ENCODE measurements at regions of chr3 and their contacts with region 1.

Region 1: DNA sequence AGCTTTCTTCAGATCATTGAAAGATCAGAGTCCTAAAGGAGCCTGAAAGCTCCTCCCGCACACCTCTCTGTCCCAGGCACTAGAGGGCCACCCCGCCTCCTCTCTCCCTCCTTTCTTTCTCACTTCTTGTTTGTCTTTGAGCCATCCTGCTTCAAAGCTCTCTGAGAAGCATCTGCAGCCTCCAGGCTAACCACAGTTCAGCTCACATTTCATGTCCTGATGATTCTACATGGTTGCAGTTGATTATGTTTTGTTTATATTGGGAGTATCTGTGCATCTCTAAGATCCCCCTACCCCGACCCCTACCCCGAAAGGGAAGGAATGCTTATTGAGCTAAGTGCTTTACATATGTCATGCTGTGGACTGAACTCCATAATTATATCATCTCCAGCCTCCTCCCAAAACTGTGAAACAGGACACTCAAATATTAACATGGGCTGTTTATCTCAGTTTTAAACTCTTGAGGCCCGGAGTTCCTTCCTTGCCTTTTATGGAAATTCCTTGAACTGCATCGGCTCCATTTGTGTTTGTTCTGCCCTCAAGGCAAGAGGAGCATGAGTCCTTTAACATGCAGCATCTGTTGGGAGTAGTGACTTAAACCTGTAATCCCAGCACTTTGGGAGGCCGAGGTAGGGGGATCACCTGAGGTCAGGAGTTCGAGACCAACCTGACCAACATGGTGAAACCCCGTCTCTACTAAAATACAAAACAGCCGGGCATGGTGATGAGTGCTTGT is 30.9 kb downstream of the MGLL start:
- DNase-seq: peak; percentile 69
- ATAC-seq: peak; percentile 89
- H3K4me3 ChIP-seq: no peak overlapping the region
- H3K27ac ChIP-seq: peak overlapping the region; percentile 41
- H3K4me1 ChIP-seq: peaks cover 28% of the 10 kb centered on the region
- H3K27me3 ChIP-seq: no peaks in the 10 kb centered on the region
- CTCF ChIP-seq: peak; percentile 54

Region 2: DNA sequence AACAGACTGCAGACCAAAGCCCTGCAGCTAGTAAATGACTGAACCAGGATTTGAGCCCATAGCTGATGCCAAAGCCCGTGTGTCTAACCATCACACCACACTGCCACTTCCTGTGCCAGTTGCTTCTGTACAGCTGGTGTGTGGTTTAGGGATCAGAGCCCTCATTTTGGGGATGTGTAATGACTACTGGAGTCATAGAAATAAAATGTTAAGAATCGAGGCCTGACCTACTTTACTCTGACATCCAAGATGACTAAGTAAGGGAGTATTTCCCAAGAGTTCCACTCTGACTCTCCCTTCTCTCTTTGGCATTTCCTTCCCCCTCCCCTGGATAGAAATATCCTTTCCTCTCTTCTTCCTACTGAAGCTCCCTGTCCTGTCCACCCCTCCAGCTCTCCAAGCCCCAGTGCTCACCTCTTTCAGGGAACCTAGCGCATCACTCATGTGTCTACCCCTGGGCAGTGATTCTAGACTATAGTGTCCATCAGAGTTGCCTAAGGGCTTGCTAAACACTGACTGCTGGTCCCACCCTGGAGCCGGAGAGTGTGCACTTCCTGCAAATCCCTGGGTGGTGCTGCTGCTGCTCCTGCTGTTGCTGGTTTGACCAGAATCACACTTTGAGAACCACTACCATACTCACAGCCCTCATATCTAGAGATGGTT is 22.9 kb before region 1 on chr3:
- CTCF ChIA-PET with region 1: interaction called, 4 read pairs
- POLR2A ChIA-PET with region 1: no interaction called
- intact Hi-C with region 1: loop called (anchors 1 kb)
- DNase-seq: peak; percentile 95
- ATAC-seq: peak; percentile 91
- H3K4me3 ChIP-seq: no peak overlapping the region
- H3K27ac ChIP-seq: peak overlapping the region; percentile 88
- H3K4me1 ChIP-seq: peaks cover 28% of the 10 kb centered on the region
- H3K27me3 ChIP-seq: no peaks in the 10 kb centered on the region
- CTCF ChIP-seq: no peak

Region 3: DNA sequence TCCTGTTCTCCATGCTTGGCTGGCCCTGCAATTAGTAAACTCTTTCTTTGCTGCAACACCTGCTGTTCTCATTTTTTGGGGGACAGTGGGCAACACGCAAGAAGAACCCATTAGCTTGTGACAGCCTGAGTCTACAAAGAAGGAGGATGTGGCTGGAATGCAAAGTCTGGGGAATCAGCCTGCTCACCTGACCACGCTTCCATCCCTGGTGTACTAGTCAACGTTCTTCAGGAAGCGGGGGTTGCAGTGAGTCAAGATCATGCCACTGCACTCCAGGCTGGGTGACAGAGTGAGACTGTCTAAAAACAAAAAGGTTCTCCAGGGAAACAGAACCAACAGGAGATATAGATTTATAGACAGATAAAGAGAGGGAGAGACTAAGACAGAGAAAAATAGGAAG is 95.9 kb after region 1 on chr3:
- CTCF ChIA-PET with region 1: no interaction called
- POLR2A ChIA-PET with region 1: no interaction called
- intact Hi-C with region 1: no loop called
- DNase-seq: peak; percentile 42
- ATAC-seq: peak; percentile 49; the same call in 1 of the 2 replicates
- H3K4me3 ChIP-seq: no peak overlapping the region
- H3K27ac ChIP-seq: no peak overlapping the region
- H3K4me1 ChIP-seq: no peaks in the 10 kb centered on the region
- H3K27me3 ChIP-seq: no peaks in the 10 kb centered on the region
- CTCF ChIP-seq: no peak